ENCODE measurements at regions of chr11 and their contacts with region 1.

Region 1: DNA sequence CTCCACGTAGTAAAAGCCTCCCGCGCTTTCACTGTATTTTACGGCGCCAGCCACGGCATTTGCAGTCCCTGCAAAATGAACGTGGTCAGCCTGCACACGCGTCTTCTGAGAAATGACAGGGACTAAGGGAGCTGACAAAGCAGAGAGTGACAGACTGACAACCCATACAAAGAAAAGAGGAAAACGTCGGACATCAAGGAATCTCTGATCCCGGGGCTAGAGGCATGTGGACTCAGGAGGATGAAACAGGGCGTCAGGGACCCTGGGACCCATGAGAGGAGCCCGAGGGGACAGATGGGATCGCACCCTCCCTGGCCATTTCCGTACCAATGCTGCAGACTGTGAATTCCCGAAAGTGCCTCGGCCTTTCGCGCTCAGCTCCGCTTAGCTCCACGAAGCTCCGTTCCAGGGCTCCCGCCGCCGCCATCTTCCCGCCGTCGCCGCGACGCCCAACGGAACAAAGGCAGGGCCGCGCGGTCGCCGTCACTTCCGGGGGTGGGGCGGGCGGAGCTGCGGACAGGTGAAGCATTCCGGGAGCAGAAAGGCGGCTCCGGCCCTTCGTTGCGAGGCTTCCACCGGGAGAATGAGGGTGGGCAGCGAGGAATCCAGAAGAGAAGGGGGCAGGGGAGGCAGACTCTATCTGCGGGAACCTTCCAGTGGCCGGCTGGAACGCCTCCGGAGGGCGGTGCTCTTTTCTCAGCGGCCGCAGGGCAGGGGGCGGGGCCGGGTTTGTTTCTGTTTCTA is at the start of gene NUP160:
- DNase-seq: peak; percentile 92
- H3K4me3 Mint-ChIP-seq: peak within 1 kb of the TSS; percentile 98
- H3K27ac Mint-ChIP-seq: peak within 1 kb of the TSS; percentile 97
- H3K4me1 Mint-ChIP-seq: peaks cover 45% of the 10 kb centered on the region
- H3K27me3 Mint-ChIP-seq: no peaks in the 10 kb centered on the region
- total RNA-seq, gene NUP160: 68.0 to 69.5 TPM

Region 2: DNA sequence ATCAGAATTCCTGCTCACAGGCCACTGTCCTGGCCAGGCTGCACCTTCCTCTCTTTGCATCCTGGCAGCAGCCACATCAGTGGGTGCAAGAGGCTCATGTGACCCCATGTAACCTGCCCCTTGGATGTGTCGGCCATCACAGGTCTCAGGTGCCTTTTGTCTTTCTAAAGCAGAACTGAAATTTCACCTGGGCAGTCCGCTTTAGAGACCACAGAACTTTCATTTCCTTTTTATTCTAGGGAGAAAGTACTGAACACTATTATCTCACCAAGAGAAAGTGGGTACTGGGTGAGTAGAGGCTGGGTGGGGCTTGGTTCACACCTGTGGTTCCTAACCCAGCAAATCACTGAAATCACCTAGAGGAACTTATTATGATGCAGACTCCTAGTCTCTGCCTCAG is 51.7 kb after region 1 on chr11:
- CTCF ChIA-PET with region 1: no interaction called
- POLR2A ChIA-PET with region 1: no interaction called
- intact Hi-C with region 1: no loop called
- DNase-seq: no peak
- H3K4me3 Mint-ChIP-seq: no peak overlapping the region
- H3K27ac Mint-ChIP-seq: no peak overlapping the region
- H3K4me1 Mint-ChIP-seq: peaks cover 8% of the 10 kb centered on the region
- H3K27me3 Mint-ChIP-seq: no peaks in the 10 kb centered on the region

Region 3: DNA sequence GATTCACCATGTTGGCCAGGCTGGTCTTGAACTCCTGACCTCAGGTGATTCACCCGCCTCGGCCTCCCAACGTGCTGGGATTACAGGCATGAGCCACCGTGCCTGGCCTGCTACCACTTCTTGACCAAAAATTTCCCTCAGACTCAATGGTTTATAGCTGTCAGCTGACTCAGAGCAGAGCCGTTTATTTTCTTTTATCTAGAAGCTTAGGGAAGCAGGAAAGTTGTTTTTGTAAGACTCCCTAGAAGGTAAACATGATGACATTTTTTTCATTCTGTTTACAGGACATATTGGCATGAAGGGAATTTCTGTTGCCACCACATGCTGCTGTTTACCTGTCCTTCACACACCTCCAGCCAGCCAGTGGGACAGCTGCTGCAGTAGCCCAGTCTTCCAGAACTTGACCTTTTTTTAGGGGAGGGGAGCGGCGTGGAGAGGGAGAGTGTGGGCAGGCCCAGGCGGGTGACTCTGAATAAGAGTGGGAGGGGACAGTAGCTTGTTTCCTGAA is 76.2 kb after region 1 on chr11:
- CTCF ChIA-PET with region 1: no interaction called
- POLR2A ChIA-PET with region 1: no interaction called
- intact Hi-C with region 1: loop called (anchors 5 kb)
- DNase-seq: peak; percentile 60
- H3K4me3 Mint-ChIP-seq: no peak overlapping the region
- H3K27ac Mint-ChIP-seq: peak overlapping the region; percentile 16
- H3K4me1 Mint-ChIP-seq: peaks cover 42% of the 10 kb centered on the region
- H3K27me3 Mint-ChIP-seq: no peaks in the 10 kb centered on the region